ENCODE measurements at regions of chr12 and their contacts with region 1.

Region 1: GRCh38 chr12:38332814-38333213 is 16.2 kb downstream of the ALG10B start:
- DNase-seq: no peak
- H3K4me3 ChIP-seq: no peak overlapping the region
- H3K27ac ChIP-seq: no peak overlapping the region
- H3K4me1 ChIP-seq: no peaks in the 10 kb centered on the region
- H3K27me3 ChIP-seq: no peaks in the 10 kb centered on the region
- CTCF ChIP-seq: no peak
- EP300 ChIP-seq: no peak
- POLR2A ChIP-seq: no peak

Region 2: DNA sequence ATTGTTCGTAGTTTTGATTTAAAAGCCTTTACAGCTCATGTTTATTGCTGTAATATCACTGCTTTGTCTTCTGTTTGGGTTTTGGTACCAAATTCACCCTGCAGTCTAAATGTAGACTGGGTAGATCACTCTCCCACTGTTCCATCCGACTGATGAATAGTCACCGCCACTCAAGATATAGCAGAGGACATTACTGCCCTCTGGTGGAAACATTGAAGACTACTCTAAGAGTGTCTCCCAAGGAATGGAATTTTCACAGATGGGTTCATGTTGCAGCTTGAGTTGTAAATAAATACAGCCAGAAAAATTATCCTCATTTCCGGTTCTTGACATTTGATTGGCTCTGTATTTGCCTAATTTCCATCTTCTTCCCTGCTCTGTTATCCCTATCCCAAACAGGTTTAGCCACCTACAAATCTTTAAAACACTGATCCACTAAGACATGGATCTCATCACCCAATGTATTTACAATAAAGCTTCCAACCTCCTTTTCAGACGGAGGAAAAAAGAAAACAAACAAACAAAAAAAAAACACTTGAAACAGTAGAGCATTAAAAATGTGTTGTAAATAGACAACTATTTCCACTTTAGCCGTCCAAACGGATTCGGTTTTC is 770.8 kb after region 1 on chr12:
- intact Hi-C with region 1: loop called in 1 of 4 experiments (anchors 10 kb)
- DNase-seq: no peak
- H3K4me3 ChIP-seq: no peak overlapping the region
- H3K27ac ChIP-seq: no peak overlapping the region
- H3K4me1 ChIP-seq: no peaks in the 10 kb centered on the region
- H3K27me3 ChIP-seq: no peaks in the 10 kb centered on the region
- CTCF ChIP-seq: peak; percentile 17 to 27 (median 22)
- EP300 ChIP-seq: no peak
- POLR2A ChIP-seq: no peak